A673 (cell line): ENCODE measurements at regions of chr1 and their contacts with region 1.

Region 1: GRCh38 chr1:117436513-117436912 is 69.3 kb downstream of the MAN1A2 start:
- DNase-seq: no peak
- H3K4me3 ChIP-seq: no peak overlapping the region
- H3K27ac ChIP-seq: no peak overlapping the region
- H3K4me1 ChIP-seq: no peaks in the 10 kb centered on the region
- H3K27me3 ChIP-seq: no peaks in the 10 kb centered on the region
- CTCF ChIP-seq: no peak

Region 2: GRCh38 chr1:117544509-117545109 is 108.1 kb after region 1 on chr1:
- CTCF ChIA-PET with region 1: interaction called, 11 read pairs
- POLR2A ChIA-PET with region 1: no interaction called
- intact Hi-C with region 1: no loop called
- DNase-seq: no peak
- H3K4me3 ChIP-seq: no peak overlapping the region
- H3K27ac ChIP-seq: no peak overlapping the region
- H3K4me1 ChIP-seq: no peaks in the 10 kb centered on the region
- H3K27me3 ChIP-seq: no peaks in the 10 kb centered on the region
- CTCF ChIP-seq: no peak